CD4-positive, alpha-beta T cell (primary cell): ENCODE measurements at regions of chr22 and their contacts with region 1.

Region 1: DNA sequence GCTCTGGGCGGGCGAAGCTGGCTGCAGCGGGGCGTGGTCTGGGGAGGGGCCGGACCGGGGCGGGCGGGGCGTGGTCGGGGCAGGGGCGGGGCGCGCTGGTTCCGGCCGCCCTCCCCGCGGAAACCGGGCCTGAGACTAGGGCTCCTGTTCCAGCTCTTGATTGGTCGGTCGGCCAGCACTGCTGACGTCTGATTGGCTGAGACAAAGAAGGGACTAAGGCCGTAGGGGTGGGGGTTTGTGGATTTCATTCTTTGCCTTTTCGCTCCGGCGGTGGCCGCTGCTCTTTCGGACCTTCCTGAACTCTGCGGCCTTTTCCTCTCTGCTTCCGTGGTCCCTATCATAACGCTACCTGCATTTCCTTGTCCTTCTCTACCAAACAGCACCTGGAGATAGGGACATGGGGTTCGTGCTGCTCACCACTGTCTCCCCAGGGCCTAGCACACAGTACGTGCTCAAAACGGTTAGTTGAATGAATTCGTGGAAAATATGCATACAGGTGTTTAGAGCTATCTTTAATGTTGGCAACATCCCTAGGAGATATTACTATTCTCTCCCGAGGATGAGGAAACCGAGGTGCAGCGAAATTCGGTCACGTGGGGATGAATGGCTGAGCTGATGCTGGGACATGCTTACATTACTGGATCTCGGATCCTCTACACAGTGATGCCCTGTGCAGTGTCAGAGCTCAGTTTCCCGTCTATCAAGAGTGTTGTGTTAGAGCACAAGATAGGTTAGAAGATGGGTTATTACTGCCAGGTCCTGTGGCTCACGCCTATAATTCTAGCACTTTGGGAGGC is 62.8 kb downstream of the NFAM1 start:
- DNase-seq: peak; percentile 66 to 91 (median 78)
- ATAC-seq: peak; percentile 94
- H3K4me3 ChIP-seq: peak overlapping the region; percentile 66
- H3K4me3 Mint-ChIP-seq: peak overlapping the region; percentile 88
- H3K27ac ChIP-seq: no peak overlapping the region
- H3K27ac Mint-ChIP-seq: peak overlapping the region; percentile 27
- H3K4me1 ChIP-seq: peaks cover 24% of the 10 kb centered on the region
- H3K4me1 Mint-ChIP-seq: peaks cover 18% of the 10 kb centered on the region
- H3K27me3 ChIP-seq: peaks cover 23 to 33% of the 10 kb centered on the region in 2 experiments
- H3K27me3 Mint-ChIP-seq: peaks cover 39% of the 10 kb centered on the region
- CTCF ChIP-seq: no peak

Region 2: GRCh38 chr22:42399315-42400271 is 30.1 kb after region 1 on chr22:
- CTCF ChIA-PET with region 1: no interaction called
- POLR2A ChIA-PET with region 1: no interaction called
- intact Hi-C with region 1: no loop called
- DNase-seq: peak in 2 of 14 experiments; percentile 11 to 13
- ATAC-seq: no peak
- H3K4me3 ChIP-seq: no peak overlapping the region
- H3K4me3 Mint-ChIP-seq: no peak overlapping the region
- H3K27ac ChIP-seq: no peak overlapping the region
- H3K27ac Mint-ChIP-seq: no peak overlapping the region
- H3K4me1 ChIP-seq: peaks cover 16% of the 10 kb centered on the region
- H3K4me1 Mint-ChIP-seq: peaks cover 5% of the 10 kb centered on the region
- H3K27me3 ChIP-seq: no peaks in the 10 kb centered on the region
- H3K27me3 Mint-ChIP-seq: no peaks in the 10 kb centered on the region
- CTCF ChIP-seq: no peak

Region 3: GRCh38 chr22:42500161-42500835 is 130.9 kb after region 1 on chr22:
- CTCF ChIA-PET with region 1: no interaction called
- POLR2A ChIA-PET with region 1: no interaction called
- intact Hi-C with region 1: loop called in 1 of 2 experiments (anchors 5 kb)
- DNase-seq: peak; percentile 74 to 93 (median 83)
- ATAC-seq: peak; percentile 96
- H3K4me3 ChIP-seq: peak overlapping the region; percentile 54
- H3K4me3 Mint-ChIP-seq: peak overlapping the region; percentile 77
- H3K27ac ChIP-seq: no peak overlapping the region
- H3K27ac Mint-ChIP-seq: no peak overlapping the region
- H3K4me1 ChIP-seq: peaks cover 21% of the 10 kb centered on the region
- H3K4me1 Mint-ChIP-seq: peaks cover 8% of the 10 kb centered on the region
- H3K27me3 ChIP-seq: no peaks in the 10 kb centered on the region
- H3K27me3 Mint-ChIP-seq: no peaks in the 10 kb centered on the region
- CTCF ChIP-seq: no peak